Ascending aorta (tissue), 2 donors: ENCODE measurements at regions of chr13 and their contacts with region 1.

Region 1: DNA sequence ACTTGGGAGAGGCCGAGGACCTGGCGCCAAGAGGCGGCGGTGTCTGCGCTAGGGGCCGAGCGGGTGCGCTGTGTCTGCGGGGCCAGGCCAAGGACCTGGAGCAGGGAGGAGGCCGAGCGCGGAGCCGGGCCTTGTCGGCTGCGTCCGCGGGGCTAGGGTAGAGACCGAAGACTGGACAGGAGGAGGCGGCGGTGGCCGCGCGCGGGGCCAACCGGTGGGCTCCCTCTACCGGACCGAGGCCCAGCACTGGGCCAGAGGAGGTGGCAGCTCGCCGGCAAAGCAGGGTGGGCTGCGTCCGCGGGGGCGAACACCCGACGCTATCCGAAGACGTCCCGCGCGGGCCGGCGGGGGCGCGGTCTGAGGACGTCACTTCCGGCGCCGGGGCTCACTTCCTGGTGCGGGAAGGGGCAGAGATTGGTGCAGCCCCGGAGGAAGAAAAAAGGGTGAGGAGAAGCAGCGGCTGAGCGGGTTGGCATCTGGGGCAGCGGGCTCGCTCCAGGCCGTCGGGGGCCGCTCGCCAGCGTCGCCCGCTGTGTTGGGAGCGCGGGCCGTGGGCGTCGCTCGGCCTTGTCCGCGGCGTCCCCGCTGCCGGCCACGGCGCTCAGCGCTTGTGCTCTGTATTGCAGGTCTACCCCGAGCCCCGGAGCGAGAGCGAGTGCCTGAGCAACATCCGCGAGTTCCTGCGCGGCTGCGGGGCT is 38.3 kb downstream of the ARHGEF7 start:
- DNase-seq: peak; percentile 64 to 96
- H3K4me3 ChIP-seq: peak overlapping the region; percentile 66 to 89
- H3K27ac ChIP-seq: peak overlapping the region; percentile 99
- H3K4me1 ChIP-seq: peaks cover 2 to 36% of the 10 kb centered on the region in 2 donors
- H3K27me3 ChIP-seq: no peaks in the 10 kb centered on the region
- CTCF ChIP-seq: peak in 2 of 3 experiments; percentile 7 to 33

Region 2: DNA sequence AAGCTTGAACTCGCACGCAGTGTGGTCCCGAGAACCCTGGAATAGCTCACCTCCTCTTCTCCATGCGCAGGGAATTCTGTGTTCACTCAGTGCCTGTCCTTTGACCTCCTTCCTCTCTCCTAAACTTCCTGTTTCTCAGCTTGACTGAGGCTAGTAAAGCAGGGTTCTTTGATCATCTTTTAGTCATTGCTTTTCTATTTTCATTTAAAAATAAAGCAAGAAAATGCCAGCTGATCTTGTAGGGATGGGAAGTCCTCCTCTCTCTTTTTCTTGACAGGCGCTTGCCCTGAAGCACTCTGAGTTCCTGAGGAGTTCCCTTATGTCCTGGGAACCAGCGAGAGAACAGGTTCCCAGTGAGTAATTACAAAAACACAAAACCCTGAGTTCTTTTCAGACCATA is 24.5 kb after region 1 on chr13:
- intact Hi-C with region 1: loop called (anchors 1 kb)
- DNase-seq: no peak
- H3K4me3 ChIP-seq: peak overlapping the region; percentile 23 to 31
- H3K27ac ChIP-seq: peak overlapping the region; percentile 92 to 96
- H3K4me1 ChIP-seq: peaks cover 23 to 67% of the 10 kb centered on the region in 2 donors
- H3K27me3 ChIP-seq: no peaks in the 10 kb centered on the region
- CTCF ChIP-seq: no peak

Region 3: GRCh38 chr13:111209613-111210012 is 56.2 kb after region 1 on chr13:
- intact Hi-C with region 1: no loop called
- DNase-seq: no peak
- H3K4me3 ChIP-seq: no peak overlapping the region
- H3K27ac ChIP-seq: peak overlapping the region; percentile 29 to 39
- H3K4me1 ChIP-seq: peaks cover 4 to 68% of the 10 kb centered on the region in 2 donors
- H3K27me3 ChIP-seq: no peaks in the 10 kb centered on the region
- CTCF ChIP-seq: no peak